GM12878 (cell line): ENCODE measurements at regions of chr20 and their contacts with region 1.

Region 1: GRCh38 chr20:22691369-22692118 is 107.2 kb upstream of the FOXA2 start:
- DNase-seq: no peak
- ATAC-seq: peak; percentile 97
- H3K4me3 ChIP-seq: no peak overlapping the region
- H3K27ac ChIP-seq: no peak overlapping the region
- H3K4me1 ChIP-seq: no peaks in the 10 kb centered on the region
- H3K27me3 ChIP-seq: no peaks in the 10 kb centered on the region
- CTCF ChIP-seq: peak; percentile 81 to 89 (median 84)
- EP300 ChIP-seq: no peak
- POLR2A ChIP-seq: no peak
- RAD21 ChIP-seq: peak; percentile 89

Region 2: DNA sequence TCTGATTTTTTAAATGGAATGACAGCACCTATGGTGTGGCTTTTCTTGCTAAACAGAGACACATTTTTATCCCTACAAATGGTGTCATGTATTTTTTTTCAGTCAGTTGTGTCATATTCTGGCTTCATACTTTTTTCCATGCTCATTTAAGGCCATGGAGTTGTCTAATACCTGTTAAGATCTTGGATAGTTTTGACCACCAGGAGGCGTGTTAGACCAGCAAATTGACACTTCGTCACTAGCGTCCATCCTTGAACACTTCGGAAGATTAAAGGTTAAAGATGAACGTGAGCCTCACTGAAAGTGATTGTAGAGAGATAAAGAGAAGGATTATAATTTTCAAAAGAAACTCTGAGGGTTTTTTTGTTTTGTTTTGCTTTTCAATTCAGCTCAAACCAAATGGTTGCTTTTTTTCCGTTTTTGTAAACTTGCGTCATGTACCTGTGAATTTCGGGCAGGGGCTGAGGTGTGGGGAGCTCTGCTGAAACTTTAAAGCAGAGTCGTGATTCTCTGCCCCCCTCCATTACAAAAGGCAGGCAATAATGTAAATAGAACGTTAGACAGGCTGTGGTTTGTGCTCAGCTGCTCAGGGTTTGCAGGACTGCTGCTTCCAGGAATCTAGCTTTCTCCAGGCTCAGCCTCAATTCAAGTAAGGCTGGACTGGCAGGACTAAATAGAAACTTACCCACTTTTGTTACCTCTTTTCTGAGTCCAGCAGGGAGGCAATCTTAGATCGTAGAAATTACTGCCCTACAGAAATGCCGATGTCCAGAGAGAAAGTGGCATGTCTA is 352.3 kb before region 1 on chr20:
- CTCF ChIA-PET with region 1: interaction called, 80 read pairs
- POLR2A ChIA-PET with region 1: no interaction called
- RAD21 ChIA-PET with region 1: interaction called, 8 read pairs
- SMC1A ChIA-PET with region 1: interaction called, 37 read pairs
- in situ Hi-C with region 1: loop called (anchors 5 kb)
- intact Hi-C with region 1: no loop called
- DNase-seq: no peak
- ATAC-seq: peak; percentile 82
- H3K4me3 ChIP-seq: no peak overlapping the region
- H3K27ac ChIP-seq: no peak overlapping the region
- H3K4me1 ChIP-seq: no peaks in the 10 kb centered on the region
- H3K27me3 ChIP-seq: no peaks in the 10 kb centered on the region
- CTCF ChIP-seq: peak; percentile 72 to 80 (median 79)
- EP300 ChIP-seq: no peak
- POLR2A ChIP-seq: no peak
- RAD21 ChIP-seq: peak; percentile 93

Region 3: GRCh38 chr20:22403632-22404361 is 287.7 kb before region 1 on chr20:
- CTCF ChIA-PET with region 1: no interaction called
- POLR2A ChIA-PET with region 1: no interaction called
- RAD21 ChIA-PET with region 1: no interaction called
- SMC1A ChIA-PET with region 1: no interaction called
- in situ Hi-C with region 1: no loop called
- intact Hi-C with region 1: no loop called
- DNase-seq: no peak
- ATAC-seq: no peak
- H3K4me3 ChIP-seq: peak overlapping the region; percentile 50
- H3K27ac ChIP-seq: no peak overlapping the region
- H3K4me1 ChIP-seq: no peaks in the 10 kb centered on the region; the same call in 1 of the 2 replicates
- H3K27me3 ChIP-seq: no peaks in the 10 kb centered on the region
- CTCF ChIP-seq: no peak
- EP300 ChIP-seq: no peak
- POLR2A ChIP-seq: no peak
- RAD21 ChIP-seq: no peak

Region 4: DNA sequence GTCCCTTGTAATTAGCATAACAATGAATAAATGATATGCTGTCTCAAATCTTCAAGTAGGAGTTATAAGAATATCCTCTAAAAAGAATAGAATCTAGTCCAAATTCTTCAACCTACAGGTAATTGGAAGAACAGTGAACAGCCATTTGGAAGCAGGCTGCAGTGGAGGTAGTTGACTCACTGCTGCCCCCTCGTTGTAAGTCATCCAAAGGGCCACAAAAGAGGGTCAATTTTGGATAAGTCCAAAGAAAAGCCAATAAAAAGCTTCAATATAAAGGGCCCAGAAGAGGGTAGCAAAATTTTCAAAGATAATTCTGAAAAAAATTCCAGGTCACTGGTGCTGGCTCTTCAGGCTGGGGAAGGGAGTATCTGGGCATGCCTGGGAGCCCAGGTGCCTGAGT is 282.8 kb after region 1 on chr20:
- CTCF ChIA-PET with region 1: interaction called, 100 read pairs
- POLR2A ChIA-PET with region 1: no interaction called
- RAD21 ChIA-PET with region 1: interaction called, 35 read pairs
- SMC1A ChIA-PET with region 1: interaction called, 32 read pairs
- in situ Hi-C with region 1: no loop called
- intact Hi-C with region 1: loop called (anchors 2 kb)
- DNase-seq: no peak
- ATAC-seq: peak; percentile 65
- H3K4me3 ChIP-seq: no peak overlapping the region
- H3K27ac ChIP-seq: no peak overlapping the region
- H3K4me1 ChIP-seq: no peaks in the 10 kb centered on the region
- H3K27me3 ChIP-seq: no peaks in the 10 kb centered on the region; a peak in 1 of 4 replicates
- CTCF ChIP-seq: peak; percentile 32 to 43 (median 38); a peak in 5 of 6 replicates
- EP300 ChIP-seq: no peak
- POLR2A ChIP-seq: no peak
- RAD21 ChIP-seq: peak; percentile 36; the same call in 1 of the 2 replicates

Region 5: DNA sequence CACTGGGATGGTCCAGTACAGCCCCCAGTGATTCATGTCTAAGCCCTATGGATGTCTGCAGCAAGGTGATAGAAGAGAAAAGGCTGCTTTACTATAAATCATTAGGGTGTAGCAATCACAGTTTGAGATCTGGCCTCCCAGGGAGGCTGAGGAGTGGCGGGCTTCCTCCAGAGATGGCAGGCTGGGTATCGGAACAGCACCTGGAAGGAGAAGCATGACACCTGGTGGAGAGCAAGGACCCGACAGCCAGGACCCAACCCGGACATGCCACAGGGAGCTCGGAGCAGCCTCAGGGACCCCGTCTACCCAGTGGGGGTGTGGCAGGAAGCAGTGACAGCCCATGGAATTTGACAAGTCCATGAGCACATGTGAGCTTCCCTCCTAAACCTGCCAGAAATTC is 509.4 kb after region 1 on chr20:
- CTCF ChIA-PET with region 1: interaction called, 37 read pairs
- POLR2A ChIA-PET with region 1: no interaction called
- RAD21 ChIA-PET with region 1: interaction called, 30 read pairs
- SMC1A ChIA-PET with region 1: interaction called, 16 read pairs
- in situ Hi-C with region 1: no loop called
- intact Hi-C with region 1: no loop called
- DNase-seq: no peak
- ATAC-seq: peak; percentile 84
- H3K4me3 ChIP-seq: no peak overlapping the region
- H3K27ac ChIP-seq: no peak overlapping the region
- H3K4me1 ChIP-seq: no peaks in the 10 kb centered on the region
- H3K27me3 ChIP-seq: peaks cover 0 to 4% of the 10 kb centered on the region in 2 experiments; a peak in 1 of 4 replicates
- CTCF ChIP-seq: peak; percentile 36 to 54 (median 40); a peak in 5 of 6 replicates
- EP300 ChIP-seq: no peak
- POLR2A ChIP-seq: no peak
- RAD21 ChIP-seq: peak; percentile 53

Region 6: DNA sequence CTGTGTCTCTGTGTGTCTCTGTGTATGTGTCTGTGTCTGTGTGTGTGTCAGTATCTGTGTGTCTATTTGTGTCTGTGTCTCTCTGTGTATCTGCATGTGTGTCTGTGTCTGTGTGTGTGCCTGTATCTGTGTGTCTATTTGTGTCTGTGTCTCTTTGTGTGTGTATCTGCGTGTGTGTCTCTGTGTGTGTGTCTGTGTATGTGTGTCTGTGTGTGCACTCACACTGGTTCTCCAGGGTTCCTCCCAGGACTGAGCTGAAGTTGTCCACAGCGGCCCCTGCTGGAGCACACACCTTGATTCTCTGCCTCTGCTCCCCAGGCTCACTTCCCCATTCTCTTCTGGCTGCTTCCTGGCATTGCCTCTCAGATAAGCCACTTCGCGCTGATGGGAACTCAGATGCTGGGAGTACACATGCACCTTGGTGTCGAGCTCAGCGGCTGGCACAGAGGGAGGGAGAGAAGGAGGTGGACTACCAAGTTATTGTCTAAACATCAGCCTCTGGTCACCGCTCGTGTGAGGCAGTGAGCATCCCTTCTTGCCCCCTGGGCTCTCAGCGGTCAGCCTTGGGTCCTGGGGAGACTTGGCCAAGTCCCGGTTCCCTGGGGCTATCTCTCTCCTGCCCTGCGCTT is 554.1 kb after region 1 on chr20:
- CTCF ChIA-PET with region 1: interaction called, 13 read pairs
- POLR2A ChIA-PET with region 1: no interaction called
- RAD21 ChIA-PET with region 1: interaction called, 12 read pairs
- SMC1A ChIA-PET with region 1: interaction called, 5 read pairs
- in situ Hi-C with region 1: loop called (anchors 10 kb)
- intact Hi-C with region 1: no loop called
- DNase-seq: peak; percentile 48
- ATAC-seq: peak; percentile 97
- H3K4me3 ChIP-seq: no peak overlapping the region
- H3K27ac ChIP-seq: no peak overlapping the region
- H3K4me1 ChIP-seq: peaks cover 24% of the 10 kb centered on the region
- H3K27me3 ChIP-seq: no peaks in the 10 kb centered on the region
- CTCF ChIP-seq: peak; percentile 71 to 77 (median 75)
- EP300 ChIP-seq: no peak
- POLR2A ChIP-seq: no peak
- RAD21 ChIP-seq: peak; percentile 56

Region 7: GRCh38 chr20:23606652-23607049 is 915.1 kb after region 1 on chr20:
- CTCF ChIA-PET with region 1: interaction called, 5 read pairs
- POLR2A ChIA-PET with region 1: no interaction called
- RAD21 ChIA-PET with region 1: no interaction called
- SMC1A ChIA-PET with region 1: no interaction called
- in situ Hi-C with region 1: no loop called
- intact Hi-C with region 1: loop called (anchors 10 kb)
- DNase-seq: no peak
- ATAC-seq: peak; percentile 99
- H3K4me3 ChIP-seq: no peak overlapping the region
- H3K27ac ChIP-seq: no peak overlapping the region
- H3K4me1 ChIP-seq: no peaks in the 10 kb centered on the region
- H3K27me3 ChIP-seq: no peaks in the 10 kb centered on the region
- CTCF ChIP-seq: peak; percentile 91 to 96 (median 91)
- EP300 ChIP-seq: no peak
- POLR2A ChIP-seq: no peak
- RAD21 ChIP-seq: peak; percentile 87